ENCODE measurements at regions of chr13 and their contacts with region 1.

Region 1: GRCh38 chr13:113639616-113640262 is 18.3 kb downstream of the ATP4B start:
- DNase-seq: no peak
- ATAC-seq: no peak
- H3K4me3 Mint-ChIP-seq: no peak overlapping the region
- H3K27ac Mint-ChIP-seq: no peak overlapping the region
- H3K4me1 Mint-ChIP-seq: peaks cover 3% of the 10 kb centered on the region
- H3K27me3 Mint-ChIP-seq: no peaks in the 10 kb centered on the region

Region 2: GRCh38 chr13:113584205-113584869 is 55.4 kb before region 1 on chr13 and contains the start of gene TFDP1:
- CTCF ChIA-PET with region 1: no interaction called
- POLR2A ChIA-PET with region 1: no interaction called
- intact Hi-C with region 1: loop called in 1 of 2 experiments (anchors 5 kb)
- DNase-seq: peak; percentile 93
- ATAC-seq: peak; percentile 92
- H3K4me3 Mint-ChIP-seq: peak within 1 kb of the TSS; percentile 90
- H3K27ac Mint-ChIP-seq: peak within 1 kb of the TSS; percentile 80
- H3K4me1 Mint-ChIP-seq: peaks cover 36% of the 10 kb centered on the region
- H3K27me3 Mint-ChIP-seq: no peaks in the 10 kb centered on the region
- total RNA-seq, gene TFDP1: 159 to 175 TPM

Region 3: GRCh38 chr13:113625965-113626721 is 13.6 kb before region 1 on chr13:
- CTCF ChIA-PET with region 1: no interaction called
- POLR2A ChIA-PET with region 1: no interaction called
- intact Hi-C with region 1: no loop called
- DNase-seq: no peak
- ATAC-seq: no peak
- H3K4me3 Mint-ChIP-seq: no peak overlapping the region
- H3K27ac Mint-ChIP-seq: no peak overlapping the region
- H3K4me1 Mint-ChIP-seq: peaks cover 2% of the 10 kb centered on the region
- H3K27me3 Mint-ChIP-seq: no peaks in the 10 kb centered on the region